ENCODE measurements at regions of chr1 and their contacts with region 1.

Region 1: GRCh38 chr1:63316984-63317816 is 5.2 kb upstream of the FOXD3 start:
- DNase-seq: peak; percentile 72
- H3K4me3 Mint-ChIP-seq: peak overlapping the region; percentile 53
- H3K27ac Mint-ChIP-seq: no peak overlapping the region
- H3K4me1 Mint-ChIP-seq: peaks cover 29% of the 10 kb centered on the region
- H3K27me3 Mint-ChIP-seq: peaks cover 67% of the 10 kb centered on the region

Region 2: GRCh38 chr1:63255153-63255552 is 62.0 kb before region 1 on chr1:
- CTCF ChIA-PET with region 1: no interaction called
- POLR2A ChIA-PET with region 1: no interaction called
- intact Hi-C with region 1: no loop called
- DNase-seq: no peak
- H3K4me3 Mint-ChIP-seq: no peak overlapping the region
- H3K27ac Mint-ChIP-seq: no peak overlapping the region
- H3K4me1 Mint-ChIP-seq: no peaks in the 10 kb centered on the region
- H3K27me3 Mint-ChIP-seq: peaks cover 6% of the 10 kb centered on the region

Region 3: DNA sequence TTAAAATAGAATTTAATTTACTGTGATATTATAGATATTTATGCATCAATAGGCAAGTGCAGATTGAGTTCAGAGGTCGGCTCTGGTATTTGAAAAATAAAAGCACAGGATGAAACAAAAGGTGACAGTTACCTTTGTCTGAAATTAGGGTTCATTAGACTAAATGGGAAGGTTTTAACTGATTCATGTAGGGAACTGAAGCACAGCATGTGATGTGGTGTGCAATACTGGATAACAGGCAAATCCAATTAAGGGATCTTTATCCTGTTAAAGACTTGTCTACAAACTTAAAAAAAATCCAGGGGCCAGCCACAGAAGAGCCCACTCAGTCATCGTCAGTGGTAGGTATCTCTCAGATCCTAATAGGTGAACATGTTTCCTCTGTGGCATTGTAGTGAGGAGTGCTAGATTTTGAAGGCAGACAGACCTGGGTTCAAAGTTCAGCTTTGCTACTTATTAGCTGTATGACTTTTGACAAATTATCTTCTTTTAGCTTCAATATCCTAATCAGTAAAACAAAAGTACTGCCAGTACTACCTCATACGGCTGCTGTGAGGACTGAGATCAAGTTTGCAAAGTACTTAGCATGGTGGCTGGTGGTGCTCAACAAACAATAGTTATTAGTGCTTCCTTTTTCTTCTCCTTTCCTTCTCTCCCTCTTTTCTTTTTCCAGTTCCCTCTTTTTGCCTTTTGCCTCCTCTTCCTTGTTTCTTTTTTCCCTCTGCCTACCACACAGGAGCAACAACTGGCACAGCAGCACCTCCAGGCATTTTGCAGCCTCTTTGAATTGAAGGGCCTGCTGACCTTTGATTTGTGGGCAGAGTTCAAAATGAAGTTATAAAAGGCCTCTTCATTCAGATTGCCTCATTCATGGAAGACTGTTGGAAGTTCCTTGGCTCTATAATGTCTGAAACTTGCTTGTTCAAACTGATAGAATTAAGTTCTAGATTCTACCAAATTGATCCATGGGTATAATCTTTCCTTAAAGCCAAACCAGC is 39.7 kb before region 1 on chr1:
- CTCF ChIA-PET with region 1: no interaction called
- POLR2A ChIA-PET with region 1: no interaction called
- intact Hi-C with region 1: no loop called
- DNase-seq: no peak
- H3K4me3 Mint-ChIP-seq: no peak overlapping the region
- H3K27ac Mint-ChIP-seq: no peak overlapping the region
- H3K4me1 Mint-ChIP-seq: no peaks in the 10 kb centered on the region
- H3K27me3 Mint-ChIP-seq: peaks cover 7% of the 10 kb centered on the region

Region 4: GRCh38 chr1:63327417-63328139 is 10.4 kb after region 1 on chr1:
- CTCF ChIA-PET with region 1: interaction called, 11 read pairs
- POLR2A ChIA-PET with region 1: no interaction called
- intact Hi-C with region 1: loop called (anchors 1 kb)
- DNase-seq: peak; percentile 76
- H3K4me3 Mint-ChIP-seq: peak overlapping the region; percentile 11
- H3K27ac Mint-ChIP-seq: no peak overlapping the region
- H3K4me1 Mint-ChIP-seq: peaks cover 22% of the 10 kb centered on the region
- H3K27me3 Mint-ChIP-seq: peaks cover 68% of the 10 kb centered on the region

Region 5: GRCh38 chr1:63442141-63442475 is 124.9 kb after region 1 on chr1:
- CTCF ChIA-PET with region 1: no interaction called
- POLR2A ChIA-PET with region 1: no interaction called
- intact Hi-C with region 1: loop called (anchors 2 kb)
- DNase-seq: no peak
- H3K4me3 Mint-ChIP-seq: no peak overlapping the region
- H3K27ac Mint-ChIP-seq: no peak overlapping the region
- H3K4me1 Mint-ChIP-seq: no peaks in the 10 kb centered on the region
- H3K27me3 Mint-ChIP-seq: no peaks in the 10 kb centered on the region

Region 6: DNA sequence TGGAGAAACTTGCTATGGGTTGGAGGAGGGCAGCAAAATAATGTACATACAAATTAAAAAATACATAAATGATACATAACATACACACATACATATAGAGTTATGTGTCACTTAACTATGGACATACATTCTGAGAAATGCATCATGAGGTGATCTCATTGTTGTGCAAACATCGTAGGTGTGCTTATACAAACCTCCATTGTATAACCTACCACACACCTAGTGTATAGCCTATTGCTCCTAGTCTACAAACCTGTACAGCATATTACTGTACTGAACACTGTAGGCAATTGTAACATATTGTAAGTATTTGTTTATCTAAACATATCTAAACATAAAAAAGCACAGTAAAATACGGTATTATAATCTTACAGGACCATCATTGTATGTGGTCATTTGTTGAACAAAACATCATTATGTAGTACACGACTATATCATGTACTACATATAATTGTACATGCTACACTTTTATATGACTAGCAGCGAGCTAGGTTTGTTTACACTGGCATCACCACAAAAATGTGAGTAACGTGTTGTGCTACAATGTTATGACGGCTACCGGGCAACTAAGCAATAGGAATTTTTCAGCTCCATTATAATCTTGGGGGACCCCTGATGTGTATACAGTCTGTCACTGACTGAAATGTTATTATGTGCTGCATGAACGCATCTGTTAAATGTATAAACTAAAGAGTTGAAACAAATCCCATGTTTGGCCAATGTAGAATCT is 170.3 kb after region 1 on chr1:
- CTCF ChIA-PET with region 1: no interaction called
- POLR2A ChIA-PET with region 1: no interaction called
- intact Hi-C with region 1: no loop called
- DNase-seq: no peak
- H3K4me3 Mint-ChIP-seq: no peak overlapping the region
- H3K27ac Mint-ChIP-seq: no peak overlapping the region
- H3K4me1 Mint-ChIP-seq: no peaks in the 10 kb centered on the region
- H3K27me3 Mint-ChIP-seq: no peaks in the 10 kb centered on the region

Measured in activated CD4-positive, alpha-beta memory T cell treated with anti-CD3 and anti-CD28 coated beads for 36 hours (primary cell).